Naive thymus-derived CD4-positive, alpha-beta T cell (primary cell): ENCODE measurements at regions of chr3 and their contacts with region 1.

Region 1: GRCh38 chr3:17151598-17152373 is 267.0 kb downstream of the PLCL2 start:
- DNase-seq: peak; percentile 27 to 81 (median 46)
- ATAC-seq: peak; percentile 87
- H3K4me3 ChIP-seq: peak overlapping the region; percentile 38
- H3K4me3 Mint-ChIP-seq: peak overlapping the region; percentile 38 to 86 (median 65)
- H3K27ac ChIP-seq: peak overlapping the region; percentile 45
- H3K27ac Mint-ChIP-seq: peak overlapping the region; percentile 41 to 95 (median 88)
- H3K4me1 ChIP-seq: peaks cover 18 to 33% of the 10 kb centered on the region in 2 donors
- H3K4me1 Mint-ChIP-seq: peaks cover 15 to 65% (median 28%) of the 10 kb centered on the region in 7 donors
- H3K27me3 ChIP-seq: no peaks in the 10 kb centered on the region
- H3K27me3 Mint-ChIP-seq: peaks cover 0 to 4% (median 0%) of the 10 kb centered on the region in 5 donors

Region 2: GRCh38 chr3:15535732-15536131 is 1616.1 kb before region 1 on chr3:
- CTCF ChIA-PET with region 1: no interaction called
- POLR2A ChIA-PET with region 1: no interaction called
- intact Hi-C with region 1: loop called in 1 of 2 experiments (anchors 5 kb)
- DNase-seq: peak in 2 of 9 donors; percentile 5 to 55
- ATAC-seq: no peak
- H3K4me3 ChIP-seq: no peak overlapping the region
- H3K4me3 Mint-ChIP-seq: peak overlapping the region in 9 of 10 donors; percentile 14 to 76 (median 65)
- H3K27ac ChIP-seq: no peak overlapping the region
- H3K27ac Mint-ChIP-seq: peak overlapping the region; percentile 6 to 89 (median 78)
- H3K4me1 ChIP-seq: peaks cover 32 to 34% of the 10 kb centered on the region in 2 donors
- H3K4me1 Mint-ChIP-seq: peaks cover 27 to 59% (median 44%) of the 10 kb centered on the region in 7 donors
- H3K27me3 ChIP-seq: no peaks in the 10 kb centered on the region
- H3K27me3 Mint-ChIP-seq: no peaks in the 10 kb centered on the region

Region 3: GRCh38 chr3:16842272-16843270 is 309.2 kb before region 1 on chr3:
- CTCF ChIA-PET with region 1: no interaction called
- POLR2A ChIA-PET with region 1: no interaction called
- intact Hi-C with region 1: loop called in 1 of 2 experiments (anchors 2 kb)
- DNase-seq: peak; percentile 49 to 85 (median 78)
- ATAC-seq: peak; percentile 95
- H3K4me3 ChIP-seq: peak overlapping the region; percentile 61
- H3K4me3 Mint-ChIP-seq: peak overlapping the region; percentile 78 to 93 (median 87)
- H3K27ac ChIP-seq: peak overlapping the region; percentile 76
- H3K27ac Mint-ChIP-seq: peak overlapping the region; percentile 92 to 99 (median 98)
- H3K4me1 ChIP-seq: peaks cover 49 to 51% of the 10 kb centered on the region in 2 donors
- H3K4me1 Mint-ChIP-seq: peaks cover 34 to 96% (median 90%) of the 10 kb centered on the region in 7 donors
- H3K27me3 ChIP-seq: no peaks in the 10 kb centered on the region
- H3K27me3 Mint-ChIP-seq: peaks cover 0 to 6% (median 0%) of the 10 kb centered on the region in 5 donors

Region 4: DNA sequence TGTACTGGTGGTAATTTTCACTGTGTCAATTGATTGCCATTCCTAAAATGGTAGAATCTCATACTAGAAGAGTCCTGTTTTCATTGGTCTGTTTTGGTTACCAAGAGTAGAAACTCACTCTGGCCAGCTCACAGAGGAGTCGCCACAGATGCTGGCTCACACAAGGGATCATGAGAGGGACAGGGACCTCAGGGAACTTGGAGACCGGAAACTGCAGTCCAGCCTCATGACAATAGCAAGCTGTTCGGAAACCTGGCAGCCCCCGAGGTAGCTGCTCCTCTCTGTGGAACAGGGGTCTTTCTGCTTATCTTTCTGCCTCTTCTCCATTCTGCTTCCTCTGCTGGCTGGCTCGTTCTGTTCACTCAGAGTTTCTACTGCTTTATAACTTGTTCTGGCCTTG is 74.2 kb before region 1 on chr3:
- CTCF ChIA-PET with region 1: no interaction called
- POLR2A ChIA-PET with region 1: no interaction called
- intact Hi-C with region 1: loop called in 1 of 2 experiments (anchors 1 kb)
- DNase-seq: no peak
- ATAC-seq: no peak
- H3K4me3 ChIP-seq: no peak overlapping the region
- H3K4me3 Mint-ChIP-seq: peak overlapping the region in 1 of 10 donors; percentile 16
- H3K27ac ChIP-seq: no peak overlapping the region
- H3K27ac Mint-ChIP-seq: peak overlapping the region in 6 of 9 donors; percentile 22 to 82 (median 43)
- H3K4me1 ChIP-seq: peaks cover 20 to 23% of the 10 kb centered on the region in 2 donors
- H3K4me1 Mint-ChIP-seq: peaks cover 35 to 76% (median 61%) of the 10 kb centered on the region in 7 donors
- H3K27me3 ChIP-seq: no peaks in the 10 kb centered on the region
- H3K27me3 Mint-ChIP-seq: no peaks in the 10 kb centered on the region

Region 5: GRCh38 chr3:17182166-17182565 is 30.4 kb after region 1 on chr3:
- CTCF ChIA-PET with region 1: interaction called, 4 read pairs
- POLR2A ChIA-PET with region 1: no interaction called
- intact Hi-C with region 1: loop called in 1 of 2 experiments (anchors 2 kb)
- DNase-seq: no peak
- ATAC-seq: no peak
- H3K4me3 ChIP-seq: no peak overlapping the region
- H3K4me3 Mint-ChIP-seq: peak overlapping the region in 2 of 10 donors; percentile 12 to 76
- H3K27ac ChIP-seq: no peak overlapping the region
- H3K27ac Mint-ChIP-seq: peak overlapping the region in 2 of 9 donors; percentile 20 to 50
- H3K4me1 ChIP-seq: peaks cover 0 to 21% of the 10 kb centered on the region in 2 donors
- H3K4me1 Mint-ChIP-seq: peaks cover 0 to 36% (median 13%) of the 10 kb centered on the region in 7 donors
- H3K27me3 ChIP-seq: no peaks in the 10 kb centered on the region
- H3K27me3 Mint-ChIP-seq: peaks cover 0 to 3% (median 0%) of the 10 kb centered on the region in 5 donors

Region 6: GRCh38 chr3:17742108-17742879 is 590.5 kb after region 1 on chr3 and contains the start of gene TBC1D5:
- CTCF ChIA-PET with region 1: no interaction called
- POLR2A ChIA-PET with region 1: no interaction called
- intact Hi-C with region 1: loop called in 1 of 2 experiments (anchors 5 kb)
- DNase-seq: peak; percentile 77 to 91 (median 84)
- ATAC-seq: peak; percentile 95
- H3K4me3 ChIP-seq: peak within 1 kb of the TSS; percentile 72
- H3K4me3 Mint-ChIP-seq: peak within 1 kb of the TSS; percentile 79 to 96 (median 92)
- H3K27ac ChIP-seq: peak within 1 kb of the TSS; percentile 71
- H3K27ac Mint-ChIP-seq: peak within 1 kb of the TSS; percentile 74 to 96 (median 88)
- H3K4me1 ChIP-seq: peaks cover 6 to 8% of the 10 kb centered on the region in 2 donors
- H3K4me1 Mint-ChIP-seq: peaks cover 17 to 49% (median 39%) of the 10 kb centered on the region in 7 donors
- H3K27me3 ChIP-seq: no peaks in the 10 kb centered on the region
- H3K27me3 Mint-ChIP-seq: no peaks in the 10 kb centered on the region
- total RNA-seq, gene TBC1D5: 30.5 to 54.0 (median 40.3) TPM

Region 7: DNA sequence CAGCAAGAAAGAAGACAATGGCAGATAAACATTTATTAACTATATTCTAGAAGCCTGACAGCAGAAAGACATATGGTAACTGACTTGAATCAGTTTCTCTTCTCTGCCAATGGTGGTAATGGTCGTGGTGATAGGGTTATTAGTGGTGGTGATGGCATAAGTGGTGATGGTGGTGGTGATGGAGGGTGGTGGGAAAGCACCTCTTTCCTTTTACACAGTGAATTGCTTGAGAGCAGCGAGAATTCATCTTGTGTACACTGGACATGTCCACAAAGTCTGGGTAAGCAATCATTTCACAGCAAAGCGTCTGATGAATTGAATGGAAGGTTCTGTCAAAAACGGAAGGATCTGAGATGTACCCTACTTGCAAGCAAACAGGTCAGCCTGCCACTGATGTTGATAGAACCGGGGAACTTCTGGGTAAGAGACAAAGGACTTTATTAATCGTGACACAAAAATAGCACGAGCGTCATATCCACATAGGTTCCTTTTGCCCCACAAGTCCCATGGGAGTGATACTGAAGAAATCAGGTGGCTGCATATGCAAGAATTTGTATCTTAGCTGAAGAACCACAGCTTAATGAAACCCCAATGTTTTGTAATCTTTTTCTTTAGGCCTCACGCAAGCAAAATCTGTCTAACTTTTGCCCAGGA is 614.2 kb after region 1 on chr3:
- CTCF ChIA-PET with region 1: no interaction called
- POLR2A ChIA-PET with region 1: no interaction called
- intact Hi-C with region 1: no loop called
- DNase-seq: no peak
- ATAC-seq: no peak
- H3K4me3 ChIP-seq: no peak overlapping the region
- H3K4me3 Mint-ChIP-seq: no peak overlapping the region
- H3K27ac ChIP-seq: no peak overlapping the region
- H3K27ac Mint-ChIP-seq: no peak overlapping the region
- H3K4me1 ChIP-seq: no peaks in the 10 kb centered on the region
- H3K4me1 Mint-ChIP-seq: no peaks in the 10 kb centered on the region
- H3K27me3 ChIP-seq: no peaks in the 10 kb centered on the region
- H3K27me3 Mint-ChIP-seq: peaks cover 0 to 36% (median 4%) of the 10 kb centered on the region in 5 donors